ENCODE measurements at regions of chr5 and their contacts with region 1.

Region 1: GRCh38 chr5:81751009-81751835 is at the start of gene SSBP2:
- DNase-seq: peak; percentile 98 to 100 (median 99)
- H3K4me3 ChIP-seq: peak within 1 kb of the TSS; percentile 57 to 97 (median 80)
- H3K27ac ChIP-seq: peak within 1 kb of the TSS; percentile 95 to 100 (median 99)
- H3K27me3 ChIP-seq: no peaks in the 10 kb centered on the region
- CTCF ChIP-seq: peak in 11 of 56 donors; percentile 5 to 38 (median 25)
- total RNA-seq, gene SSBP2: 66.2 to 139 (median 94.4) TPM

Region 2: GRCh38 chr5:81425569-81425968 is 325.7 kb before region 1 on chr5:
- intact Hi-C with region 1: loop called (anchors 5 kb)
- DNase-seq: no peak
- H3K4me3 ChIP-seq: peak overlapping the region in 1 of 59 donors; percentile 14
- H3K27ac ChIP-seq: peak overlapping the region in 41 of 59 donors; percentile 0 to 67 (median 39)
- H3K27me3 ChIP-seq: no peaks in the 10 kb centered on the region
- CTCF ChIP-seq: peak; percentile 64 to 93 (median 79)

Region 3: GRCh38 chr5:81787474-81788242 is 36.4 kb after region 1 on chr5:
- intact Hi-C with region 1: loop called (anchors 5 kb)
- DNase-seq: peak in 1 of 10 donors; percentile 68
- H3K4me3 ChIP-seq: peak overlapping the region in 24 of 59 donors; percentile 2 to 38 (median 14)
- H3K27ac ChIP-seq: peak overlapping the region in 40 of 59 donors; percentile 7 to 72 (median 50)
- H3K27me3 ChIP-seq: no peaks in the 10 kb centered on the region
- CTCF ChIP-seq: no peak

Region 4: DNA sequence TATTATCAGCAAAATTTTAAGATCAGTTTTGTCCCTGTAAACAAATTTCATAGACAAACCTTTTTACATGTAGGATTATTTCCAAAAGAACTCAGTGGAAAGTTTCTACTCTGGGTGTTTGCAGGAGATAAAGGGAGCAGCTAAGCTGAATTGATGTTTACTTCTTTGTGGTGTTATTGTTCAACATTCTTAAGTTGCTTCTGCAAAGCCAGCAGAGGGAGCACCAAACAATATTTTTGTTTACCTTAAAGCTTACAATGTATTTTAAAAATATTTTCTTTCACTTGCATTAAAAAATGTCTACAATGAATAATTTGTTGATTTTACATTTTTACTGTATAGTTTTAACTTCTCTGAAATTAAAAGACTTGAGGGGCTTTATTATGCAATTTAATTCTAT is 356.0 kb after region 1 on chr5:
- intact Hi-C with region 1: loop called in 1 of 2 experiments (anchors 5 kb)
- DNase-seq: no peak
- H3K4me3 ChIP-seq: peak overlapping the region in 9 of 59 donors; percentile 3 to 18 (median 10)
- H3K27ac ChIP-seq: peak overlapping the region in 27 of 59 donors; percentile 1 to 73 (median 31)
- H3K27me3 ChIP-seq: no peaks in the 10 kb centered on the region
- CTCF ChIP-seq: peak; percentile 18 to 74 (median 57)

Measured in dorsolateral prefrontal cortex (tissue), 120 donors.